ENCODE measurements at regions of chrX and their contacts with region 1.

Region 1: GRCh38 chrX:13087322-13088155 is 43.1 kb upstream of the FAM9C start:
- DNase-seq: peak; percentile 61
- H3K4me3 Mint-ChIP-seq: peak overlapping the region; percentile 82
- H3K27ac Mint-ChIP-seq: peak overlapping the region; percentile 100
- H3K4me1 Mint-ChIP-seq: peaks cover 69% of the 10 kb centered on the region
- H3K27me3 Mint-ChIP-seq: no peaks in the 10 kb centered on the region

Region 2: GRCh38 chrX:11758400-11759171 is 1329.0 kb before region 1 on chrX:
- intact Hi-C with region 1: loop called (anchors 5 kb)
- DNase-seq: peak; percentile 82
- H3K4me3 Mint-ChIP-seq: peak overlapping the region; percentile 97
- H3K27ac Mint-ChIP-seq: peak overlapping the region; percentile 77
- H3K4me1 Mint-ChIP-seq: peaks cover 22% of the 10 kb centered on the region
- H3K27me3 Mint-ChIP-seq: peaks cover 24% of the 10 kb centered on the region

Region 3: GRCh38 chrX:13000301-13000811 is 87.2 kb before region 1 on chrX:
- intact Hi-C with region 1: loop called (anchors 1 kb)
- DNase-seq: no peak
- H3K4me3 Mint-ChIP-seq: peak overlapping the region; percentile 66
- H3K27ac Mint-ChIP-seq: peak overlapping the region; percentile 98
- H3K4me1 Mint-ChIP-seq: peaks cover 62% of the 10 kb centered on the region
- H3K27me3 Mint-ChIP-seq: no peaks in the 10 kb centered on the region

Region 4: GRCh38 chrX:13077168-13077567 is 10.4 kb before region 1 on chrX:
- intact Hi-C with region 1: loop called (anchors 1 kb)
- DNase-seq: peak; percentile 19
- H3K4me3 Mint-ChIP-seq: no peak overlapping the region
- H3K27ac Mint-ChIP-seq: peak overlapping the region; percentile 90
- H3K4me1 Mint-ChIP-seq: peaks cover 56% of the 10 kb centered on the region
- H3K27me3 Mint-ChIP-seq: no peaks in the 10 kb centered on the region

Region 5: DNA sequence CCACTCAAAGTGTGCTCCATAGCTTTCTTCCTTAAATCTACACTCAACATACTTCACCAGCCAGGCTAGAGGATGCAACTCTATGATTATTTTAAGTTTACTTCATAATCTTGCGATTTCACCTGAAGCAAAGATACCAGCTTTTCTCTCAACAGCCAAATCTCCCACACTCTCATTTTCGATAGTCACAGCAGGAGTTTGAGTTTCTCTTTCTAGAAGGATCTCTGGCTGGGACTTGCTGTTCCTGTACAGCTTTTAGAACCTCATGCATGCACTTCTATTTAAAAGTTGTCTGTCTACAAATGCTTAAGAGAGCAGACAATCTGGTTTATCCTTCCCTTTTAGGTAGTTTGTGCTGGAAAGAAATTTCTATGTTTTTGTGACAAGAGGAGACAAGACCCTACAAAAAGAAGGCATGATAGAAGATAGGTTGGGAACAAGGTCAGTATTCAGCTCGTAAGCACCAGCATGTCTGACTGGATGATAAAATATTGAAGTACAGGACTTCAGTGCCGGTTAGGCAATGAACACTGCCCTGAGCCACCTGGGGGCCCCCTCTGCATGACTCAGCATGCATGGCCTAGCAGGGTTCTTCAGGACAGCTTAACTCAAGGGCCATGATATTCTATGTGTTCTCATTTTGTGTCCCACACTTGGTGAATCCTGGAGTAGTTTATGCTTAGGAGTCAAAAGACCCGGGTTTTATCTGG is 166.7 kb after region 1 on chrX:
- intact Hi-C with region 1: loop called (anchors 5 kb)
- DNase-seq: no peak
- H3K4me3 Mint-ChIP-seq: no peak overlapping the region
- H3K27ac Mint-ChIP-seq: no peak overlapping the region
- H3K4me1 Mint-ChIP-seq: peaks cover 48% of the 10 kb centered on the region
- H3K27me3 Mint-ChIP-seq: no peaks in the 10 kb centered on the region

Region 6: DNA sequence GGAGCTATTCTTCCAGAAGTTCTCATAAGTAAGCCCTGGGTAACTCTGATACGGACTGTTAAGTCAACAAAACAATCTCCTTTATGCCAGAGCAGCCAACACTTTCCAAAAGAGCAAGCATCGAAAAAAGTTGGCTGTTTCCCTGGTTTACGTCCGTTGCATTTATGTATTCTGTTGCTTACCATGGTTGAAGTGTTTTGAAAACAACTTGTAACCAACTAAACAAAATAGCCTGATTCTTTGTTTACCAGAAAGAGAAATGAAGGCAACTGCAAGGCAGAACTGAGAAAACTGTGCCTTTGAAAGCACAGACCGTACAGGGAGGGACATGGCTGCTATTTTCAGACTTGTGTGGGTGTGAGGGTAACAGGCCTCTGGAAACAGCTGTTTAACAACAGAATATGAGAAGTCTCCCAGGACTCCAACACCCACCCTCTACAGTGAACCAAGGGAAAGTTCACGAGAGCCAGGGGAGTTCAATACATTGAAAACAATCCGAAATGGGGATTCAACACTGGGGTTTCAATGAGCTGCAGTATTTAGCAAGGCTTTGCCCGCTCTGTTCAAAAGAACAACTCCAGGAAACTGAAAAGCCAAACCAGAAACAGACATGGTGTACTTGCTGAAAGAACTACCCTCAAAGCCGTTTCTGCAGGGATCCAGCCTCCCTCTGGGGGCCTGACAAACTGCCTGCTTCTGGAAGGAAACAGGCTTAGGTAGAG is 386.1 kb after region 1 on chrX:
- intact Hi-C with region 1: loop called (anchors 5 kb)
- DNase-seq: no peak
- H3K4me3 Mint-ChIP-seq: peak overlapping the region; percentile 69
- H3K27ac Mint-ChIP-seq: peak overlapping the region; percentile 88
- H3K4me1 Mint-ChIP-seq: peaks cover 32% of the 10 kb centered on the region
- H3K27me3 Mint-ChIP-seq: no peaks in the 10 kb centered on the region